Calu3 (cell line): ENCODE measurements at regions of chr15 and their contacts with region 1.

Region 1: GRCh38 chr15:74768771-74769342 is 13.0 kb upstream of the CSK start:
- DNase-seq: peak; percentile 81
- H3K4me3 Mint-ChIP-seq: no peak overlapping the region
- H3K27ac Mint-ChIP-seq: peak overlapping the region; percentile 28
- H3K4me1 Mint-ChIP-seq: peaks cover 9% of the 10 kb centered on the region
- H3K27me3 Mint-ChIP-seq: peaks cover 26% of the 10 kb centered on the region
- CTCF ChIP-seq: peak; percentile 84

Region 2: DNA sequence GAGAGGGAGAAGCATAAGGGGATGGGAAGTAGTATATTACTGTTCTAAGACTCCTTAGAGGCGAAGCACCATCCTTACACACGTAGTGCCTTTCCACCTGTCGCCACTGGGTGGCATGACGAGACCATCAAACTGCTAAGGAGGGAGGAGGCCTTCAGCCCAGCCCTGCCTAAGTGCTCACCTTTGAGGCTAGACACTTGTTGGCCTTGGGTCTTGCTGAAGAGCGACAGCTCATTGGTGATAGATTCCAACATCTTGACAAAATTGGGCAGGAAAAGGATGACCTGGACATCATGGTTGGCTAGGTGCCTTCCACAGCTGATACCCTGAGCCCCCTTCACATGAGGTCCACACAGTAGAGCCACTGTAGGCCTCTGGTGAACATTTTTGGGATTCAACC is 133.6 kb before region 1 on chr15:
- CTCF ChIA-PET with region 1: interaction called, 107 read pairs
- intact Hi-C with region 1: loop called (anchors 1 kb)
- DNase-seq: peak; percentile 81
- H3K4me3 Mint-ChIP-seq: no peak overlapping the region
- H3K27ac Mint-ChIP-seq: no peak overlapping the region
- H3K4me1 Mint-ChIP-seq: no peaks in the 10 kb centered on the region
- H3K27me3 Mint-ChIP-seq: no peaks in the 10 kb centered on the region
- CTCF ChIP-seq: peak; percentile 94

Region 3: GRCh38 chr15:74758736-74759135 is 10.1 kb before region 1 on chr15:
- CTCF ChIA-PET with region 1: interaction called, 10 read pairs
- intact Hi-C with region 1: no loop called
- DNase-seq: no peak
- H3K4me3 Mint-ChIP-seq: no peak overlapping the region
- H3K27ac Mint-ChIP-seq: no peak overlapping the region
- H3K4me1 Mint-ChIP-seq: no peaks in the 10 kb centered on the region
- H3K27me3 Mint-ChIP-seq: no peaks in the 10 kb centered on the region
- CTCF ChIP-seq: no peak

Region 4: DNA sequence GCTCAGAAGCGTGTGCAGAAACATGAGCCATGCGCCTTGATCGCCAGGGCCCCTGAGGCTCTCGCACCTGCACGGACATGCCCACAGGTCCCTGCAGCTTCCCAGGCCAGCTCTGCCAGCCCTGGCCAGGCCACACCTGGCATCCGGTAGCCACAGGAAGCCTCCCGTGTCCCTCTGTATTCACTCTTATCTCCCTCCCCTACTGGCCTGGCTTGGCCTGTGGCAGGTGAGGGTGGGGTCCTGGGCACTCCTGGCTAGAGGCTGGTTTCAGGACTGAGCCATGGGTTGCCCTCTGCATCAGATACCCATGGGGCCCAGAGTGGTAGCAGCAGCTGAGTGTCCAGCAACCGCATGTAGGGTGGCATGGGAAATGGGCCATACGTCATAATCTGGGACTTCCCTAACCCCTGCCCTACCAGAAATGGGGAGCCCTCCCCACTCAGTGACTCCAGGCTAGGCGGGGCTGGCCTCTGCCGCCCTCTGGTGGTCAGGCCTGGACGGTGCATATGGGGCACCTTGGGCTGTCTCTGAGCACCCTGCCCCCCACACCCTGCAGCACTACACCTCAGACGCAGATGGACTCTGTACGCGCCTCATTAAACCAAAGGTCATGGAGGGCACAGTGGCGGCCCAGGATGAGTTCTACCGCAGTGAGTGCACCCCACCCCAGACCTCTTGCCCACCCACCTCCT is 31.1 kb after region 1 on chr15:
- CTCF ChIA-PET with region 1: interaction called, 19 read pairs
- intact Hi-C with region 1: loop called (anchors 1 kb)
- DNase-seq: peak; percentile 91
- H3K4me3 Mint-ChIP-seq: no peak overlapping the region
- H3K27ac Mint-ChIP-seq: no peak overlapping the region
- H3K4me1 Mint-ChIP-seq: no peaks in the 10 kb centered on the region
- H3K27me3 Mint-ChIP-seq: no peaks in the 10 kb centered on the region
- CTCF ChIP-seq: peak; percentile 98

Region 5: DNA sequence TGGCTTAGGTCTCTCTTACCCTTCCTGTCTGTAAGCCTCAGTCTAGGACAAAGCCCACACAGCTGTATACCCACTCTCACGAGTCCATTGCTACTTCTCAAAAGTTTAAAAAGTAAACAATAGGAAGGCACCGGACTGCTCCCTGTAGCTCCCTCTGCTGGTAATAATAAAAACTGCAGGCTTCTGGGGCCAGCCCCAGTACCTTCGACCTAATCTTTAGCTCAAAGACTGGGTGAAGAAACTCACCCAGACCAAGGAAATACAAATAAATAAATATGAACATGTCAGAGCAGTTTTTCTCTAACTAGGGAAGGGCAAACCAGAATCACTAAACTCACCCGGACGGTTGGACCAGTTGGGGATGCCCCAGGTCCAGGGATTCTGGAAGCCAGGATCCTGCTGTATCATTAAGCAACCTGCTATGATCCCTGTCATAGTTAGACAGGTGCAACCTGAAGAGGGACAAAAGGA is 132.8 kb after region 1 on chr15:
- CTCF ChIA-PET with region 1: interaction called, 19 read pairs
- intact Hi-C with region 1: loop called (anchors 2 kb)
- DNase-seq: peak; percentile 81
- H3K4me3 Mint-ChIP-seq: no peak overlapping the region
- H3K27ac Mint-ChIP-seq: no peak overlapping the region
- H3K4me1 Mint-ChIP-seq: peaks cover 13% of the 10 kb centered on the region
- H3K27me3 Mint-ChIP-seq: no peaks in the 10 kb centered on the region
- CTCF ChIP-seq: peak; percentile 93

Region 6: GRCh38 chr15:74988007-74988800 is 219.3 kb after region 1 on chr15:
- CTCF ChIA-PET with region 1: interaction called, 12 read pairs
- intact Hi-C with region 1: no loop called
- DNase-seq: peak; percentile 80
- H3K4me3 Mint-ChIP-seq: no peak overlapping the region
- H3K27ac Mint-ChIP-seq: no peak overlapping the region
- H3K4me1 Mint-ChIP-seq: peaks cover 15% of the 10 kb centered on the region
- H3K27me3 Mint-ChIP-seq: peaks cover 58% of the 10 kb centered on the region
- CTCF ChIP-seq: peak; percentile 57

Region 7: GRCh38 chr15:75023181-75023871 is 254.5 kb after region 1 on chr15 and contains the start of gene PPCDC:
- CTCF ChIA-PET with region 1: no interaction called
- intact Hi-C with region 1: no loop called
- DNase-seq: peak; percentile 98
- H3K4me3 Mint-ChIP-seq: peak within 1 kb of the TSS; percentile 94
- H3K27ac Mint-ChIP-seq: peak within 1 kb of the TSS; percentile 97
- H3K4me1 Mint-ChIP-seq: peaks cover 20% of the 10 kb centered on the region
- H3K27me3 Mint-ChIP-seq: no peaks in the 10 kb centered on the region
- CTCF ChIP-seq: no peak
- total RNA-seq, gene PPCDC: 23.4 and 24.4 TPM in 2 replicates

Region 8: DNA sequence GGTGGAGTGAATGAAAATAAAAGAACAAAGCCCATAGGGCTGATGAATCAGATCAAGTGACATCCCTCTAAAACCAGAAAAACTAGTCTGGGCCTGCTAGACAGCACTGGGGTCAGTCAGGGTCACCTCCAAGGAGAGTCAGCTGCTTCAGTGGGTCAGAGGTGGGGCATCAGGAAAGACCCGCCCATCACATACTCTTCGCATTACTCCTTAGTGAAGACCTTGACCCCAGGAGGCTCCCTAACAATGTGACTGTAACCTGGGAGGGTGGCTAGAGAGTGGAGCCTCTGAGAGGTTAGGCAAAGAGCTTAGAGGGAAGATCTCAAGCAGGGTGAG is 267.4 kb after region 1 on chr15:
- CTCF ChIA-PET with region 1: no interaction called
- intact Hi-C with region 1: no loop called
- DNase-seq: peak; percentile 80
- H3K4me3 Mint-ChIP-seq: no peak overlapping the region
- H3K27ac Mint-ChIP-seq: peak overlapping the region; percentile 21
- H3K4me1 Mint-ChIP-seq: peaks cover 60% of the 10 kb centered on the region
- H3K27me3 Mint-ChIP-seq: no peaks in the 10 kb centered on the region
- CTCF ChIP-seq: no peak